ENCODE measurements at regions of chr1 and their contacts with region 1.

Region 1: DNA sequence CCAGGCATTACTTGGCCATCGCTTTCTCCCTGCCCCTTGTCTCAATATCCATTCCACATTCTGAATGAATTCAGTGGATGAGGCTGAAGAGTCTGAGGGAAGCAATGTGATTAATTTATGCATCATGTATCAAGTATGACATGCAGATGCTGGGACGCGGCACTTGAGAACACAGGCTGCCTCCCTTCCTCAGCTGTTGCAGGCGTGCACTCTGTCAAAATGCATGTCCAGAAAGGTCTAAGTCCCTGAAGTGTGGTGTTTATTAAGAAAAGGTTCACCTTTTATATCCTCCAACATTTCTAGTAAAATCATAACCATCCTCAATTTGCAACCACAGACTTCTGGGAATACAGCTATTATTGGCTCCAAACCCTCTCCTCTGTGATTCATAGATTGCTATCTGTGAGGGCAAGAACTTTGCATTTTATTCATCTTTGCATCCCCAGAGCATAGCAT is 22.6 kb upstream of the RAB3GAP2 start:
- DNase-seq: no peak
- H3K4me3 ChIP-seq: no peak overlapping the region
- H3K27ac ChIP-seq: no peak overlapping the region
- H3K4me1 ChIP-seq: peaks cover under 1% of the 10 kb centered on the region
- H3K27me3 ChIP-seq: peaks cover 10 to 16% of the 10 kb centered on the region in 2 experiments
- CTCF ChIP-seq: no peak
- POLR2A ChIP-seq: no peak

Region 2: DNA sequence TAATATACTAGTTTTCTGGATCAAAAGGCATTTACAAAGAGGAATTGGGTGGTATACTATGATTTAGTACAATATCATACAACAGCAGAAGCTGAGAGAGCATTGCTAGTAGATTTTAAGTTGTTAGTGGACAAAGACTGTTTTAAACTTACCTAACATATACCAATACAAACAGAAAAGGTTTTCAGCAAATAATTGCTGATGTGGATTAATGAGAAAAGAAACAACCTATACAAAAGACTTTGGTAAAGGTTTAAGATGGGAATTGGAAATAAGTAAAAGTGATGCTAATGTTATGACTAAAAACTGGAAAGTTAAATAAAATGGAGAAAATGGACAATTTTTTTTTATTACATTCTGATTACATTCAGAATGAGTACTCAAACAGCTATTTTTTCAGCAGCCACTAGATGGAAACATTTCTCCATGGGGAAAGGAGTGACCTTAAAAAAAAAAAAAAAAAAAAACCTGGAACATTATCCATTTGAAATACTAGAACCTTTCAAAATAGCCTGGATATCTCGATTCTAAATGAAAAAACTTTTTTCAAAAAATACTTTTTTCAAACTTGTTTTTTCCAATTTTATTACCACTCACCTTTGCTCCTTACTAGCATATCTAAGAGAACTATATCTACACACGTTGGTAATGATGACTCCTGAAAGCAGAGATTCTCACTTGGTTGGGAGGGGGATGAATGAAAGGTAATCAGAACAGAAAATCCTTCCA is 303.9 kb before region 1 on chr1:
- CTCF ChIA-PET with region 1: interaction called, 3 read pairs
- POLR2A ChIA-PET with region 1: no interaction called
- dilution Hi-C with region 1: no loop called
- intact Hi-C with region 1: loop called (anchors 10 kb)
- DNase-seq: peak; percentile 58
- H3K4me3 ChIP-seq: no peak overlapping the region
- H3K27ac ChIP-seq: no peak overlapping the region
- H3K4me1 ChIP-seq: no peaks in the 10 kb centered on the region
- H3K27me3 ChIP-seq: no peaks in the 10 kb centered on the region
- CTCF ChIP-seq: peak; percentile 31 to 47
- POLR2A ChIP-seq: no peak

Region 3: GRCh38 chr1:220170836-220171526 is 123.9 kb before region 1 on chr1:
- CTCF ChIA-PET with region 1: no interaction called
- POLR2A ChIA-PET with region 1: no interaction called
- dilution Hi-C with region 1: no loop called
- intact Hi-C with region 1: no loop called
- DNase-seq: no peak
- H3K4me3 ChIP-seq: no peak overlapping the region
- H3K27ac ChIP-seq: no peak overlapping the region
- H3K4me1 ChIP-seq: no peaks in the 10 kb centered on the region
- H3K27me3 ChIP-seq: no peaks in the 10 kb centered on the region
- CTCF ChIP-seq: no peak
- POLR2A ChIP-seq: no peak

Region 4: GRCh38 chr1:220217383-220217988 is 77.4 kb before region 1 on chr1:
- CTCF ChIA-PET with region 1: interaction called, 14 read pairs
- POLR2A ChIA-PET with region 1: no interaction called
- dilution Hi-C with region 1: no loop called
- intact Hi-C with region 1: no loop called
- DNase-seq: peak; percentile 29
- H3K4me3 ChIP-seq: no peak overlapping the region
- H3K27ac ChIP-seq: no peak overlapping the region
- H3K4me1 ChIP-seq: no peaks in the 10 kb centered on the region
- H3K27me3 ChIP-seq: no peaks in the 10 kb centered on the region
- CTCF ChIP-seq: peak; percentile 13 to 26
- POLR2A ChIP-seq: no peak

Region 5: GRCh38 chr1:220281159-220281574 is 13.7 kb before region 1 on chr1:
- CTCF ChIA-PET with region 1: interaction called, 60 read pairs
- POLR2A ChIA-PET with region 1: no interaction called
- dilution Hi-C with region 1: no loop called
- intact Hi-C with region 1: no loop called
- DNase-seq: peak; percentile 53
- H3K4me3 ChIP-seq: no peak overlapping the region
- H3K27ac ChIP-seq: no peak overlapping the region
- H3K4me1 ChIP-seq: no peaks in the 10 kb centered on the region
- H3K27me3 ChIP-seq: peaks cover 20 to 24% of the 10 kb centered on the region in 2 experiments
- CTCF ChIP-seq: peak; percentile 17 to 18
- POLR2A ChIP-seq: no peak

Region 6: GRCh38 chr1:220527908-220528678 is 233.2 kb after region 1 on chr1 and contains the start of gene MARK1:
- CTCF ChIA-PET with region 1: interaction called, 13 read pairs
- POLR2A ChIA-PET with region 1: no interaction called
- dilution Hi-C with region 1: no loop called
- intact Hi-C with region 1: loop called (anchors 5 kb)
- DNase-seq: peak; percentile 37
- H3K4me3 ChIP-seq: peak within 1 kb of the TSS; percentile 64 to 94 (median 78)
- H3K27ac ChIP-seq: peak within 1 kb of the TSS; percentile 2
- H3K4me1 ChIP-seq: peaks cover 7% of the 10 kb centered on the region
- H3K27me3 ChIP-seq: peaks cover 10 to 23% of the 10 kb centered on the region in 2 experiments
- CTCF ChIP-seq: no peak
- POLR2A ChIP-seq: peak; percentile 28
- total RNA-seq, gene MARK1: 5.5 and 6.0 TPM in 2 replicates

Region 7: GRCh38 chr1:220803401-220804201 is 508.7 kb after region 1 on chr1:
- CTCF ChIA-PET with region 1: interaction called, 18 read pairs
- POLR2A ChIA-PET with region 1: no interaction called
- dilution Hi-C with region 1: no loop called
- intact Hi-C with region 1: loop called (anchors 1 kb)
- DNase-seq: peak; percentile 59
- H3K4me3 ChIP-seq: no peak overlapping the region
- H3K27ac ChIP-seq: no peak overlapping the region
- H3K4me1 ChIP-seq: no peaks in the 10 kb centered on the region
- H3K27me3 ChIP-seq: peaks cover 6 to 11% of the 10 kb centered on the region in 2 experiments
- CTCF ChIP-seq: peak; percentile 62 to 83
- POLR2A ChIP-seq: no peak